ENCODE measurements at regions of chr10 and their contacts with region 1.

Region 1: GRCh38 chr10:15201589-15202308 is 33.3 kb upstream of the NMT2 start:
- DNase-seq: no peak
- H3K4me3 Mint-ChIP-seq: no peak overlapping the region
- H3K27ac Mint-ChIP-seq: no peak overlapping the region
- H3K4me1 Mint-ChIP-seq: peaks cover 42% of the 10 kb centered on the region
- H3K27me3 Mint-ChIP-seq: no peaks in the 10 kb centered on the region

Region 2: DNA sequence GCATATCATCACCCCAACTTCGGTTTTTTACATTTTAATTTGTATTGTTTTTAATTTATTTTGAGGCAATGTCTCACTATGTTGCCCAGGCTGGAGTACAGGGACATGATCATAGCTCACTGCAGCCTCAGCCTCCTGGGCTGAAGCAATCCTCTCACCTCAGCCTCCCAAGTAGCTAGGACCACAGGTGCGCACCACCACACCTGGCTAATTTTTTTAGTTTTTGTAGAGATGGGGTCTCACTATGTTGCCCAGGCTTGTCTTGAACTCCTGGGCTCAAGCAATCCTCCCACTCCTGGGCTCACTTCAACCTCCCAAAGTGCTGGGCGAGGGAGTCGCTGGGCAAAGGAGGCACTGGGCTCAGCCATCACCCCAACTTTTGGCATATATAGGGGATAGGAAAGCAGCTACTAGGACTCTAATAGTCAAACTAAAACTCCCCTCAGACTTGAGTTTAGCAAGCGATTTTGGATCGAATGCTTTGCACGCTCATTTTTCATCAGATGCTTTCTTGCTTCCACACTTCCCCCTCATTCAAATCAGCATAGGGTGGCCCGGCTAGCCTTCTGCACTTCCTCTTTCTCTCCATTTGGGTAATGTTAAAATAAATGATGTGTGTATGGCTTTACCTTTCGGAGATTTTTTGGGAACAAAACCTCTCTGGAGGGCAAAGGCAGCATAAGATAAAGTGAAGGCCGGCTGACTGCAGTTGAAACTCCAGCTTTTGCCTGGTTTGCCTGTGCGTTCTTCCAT is 12.4 kb before region 1 on chr10:
- CTCF ChIA-PET with region 1: interaction called, 14 read pairs
- POLR2A ChIA-PET with region 1: no interaction called
- DNase-seq: no peak
- H3K4me3 Mint-ChIP-seq: no peak overlapping the region
- H3K27ac Mint-ChIP-seq: peak overlapping the region; percentile 55
- H3K4me1 Mint-ChIP-seq: peaks cover 44% of the 10 kb centered on the region
- H3K27me3 Mint-ChIP-seq: no peaks in the 10 kb centered on the region

Region 3: GRCh38 chr10:15325243-15325943 is 123.6 kb after region 1 on chr10:
- CTCF ChIA-PET with region 1: no interaction called
- POLR2A ChIA-PET with region 1: no interaction called
- DNase-seq: no peak
- H3K4me3 Mint-ChIP-seq: no peak overlapping the region
- H3K27ac Mint-ChIP-seq: no peak overlapping the region
- H3K4me1 Mint-ChIP-seq: peaks cover 3% of the 10 kb centered on the region
- H3K27me3 Mint-ChIP-seq: no peaks in the 10 kb centered on the region